GM12878 (cell line): ENCODE measurements at regions of chr10 and their contacts with region 1.

Region 1: DNA sequence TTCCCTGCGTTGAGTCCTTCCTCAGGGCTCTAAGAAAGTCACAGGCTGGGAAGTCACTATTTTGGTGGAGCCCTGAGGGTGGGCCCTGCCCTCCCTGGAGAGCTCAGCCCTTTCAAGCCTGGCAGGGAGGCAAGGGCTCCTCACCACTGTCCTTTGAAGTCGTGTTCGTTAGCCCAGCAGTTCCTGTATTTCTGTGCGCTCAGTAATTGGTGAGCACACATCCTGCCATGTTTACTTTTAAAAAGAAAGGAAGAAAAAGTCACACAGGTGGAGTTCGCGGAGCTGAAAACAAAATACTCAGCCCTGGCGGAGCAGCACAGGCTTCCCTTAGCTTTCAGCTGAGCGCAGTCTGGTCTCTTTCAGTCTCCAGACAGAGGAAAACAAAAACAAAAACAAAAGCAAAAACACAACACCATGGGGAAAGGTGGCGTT is 37.1 kb downstream of the PRKCQ start:
- DNase-seq: no peak
- ATAC-seq: peak; percentile 73
- H3K4me3 ChIP-seq: no peak overlapping the region
- H3K27ac ChIP-seq: no peak overlapping the region
- H3K4me1 ChIP-seq: peaks cover 6% of the 10 kb centered on the region
- H3K27me3 ChIP-seq: peaks cover under 1% of the 10 kb centered on the region in 2 experiments; a peak in 2 of 4 replicates
- CTCF ChIP-seq: no peak
- EP300 ChIP-seq: no peak
- POLR2A ChIP-seq: no peak
- RAD21 ChIP-seq: no peak

Region 2: GRCh38 chr10:6498771-6499170 is 44.2 kb before region 1 on chr10:
- CTCF ChIA-PET with region 1: interaction called, 3 read pairs
- POLR2A ChIA-PET with region 1: no interaction called
- RAD21 ChIA-PET with region 1: interaction called, 16 read pairs
- SMC1A ChIA-PET with region 1: interaction called, 13 read pairs
- in situ Hi-C with region 1: no loop called
- intact Hi-C with region 1: no loop called
- DNase-seq: no peak
- ATAC-seq: no peak
- H3K4me3 ChIP-seq: no peak overlapping the region
- H3K27ac ChIP-seq: no peak overlapping the region
- H3K4me1 ChIP-seq: no peaks in the 10 kb centered on the region
- H3K27me3 ChIP-seq: peaks cover 0 to 2% of the 10 kb centered on the region in 2 experiments; a peak in 2 of 4 replicates
- CTCF ChIP-seq: no peak
- EP300 ChIP-seq: no peak
- POLR2A ChIP-seq: no peak
- RAD21 ChIP-seq: no peak

Region 3: DNA sequence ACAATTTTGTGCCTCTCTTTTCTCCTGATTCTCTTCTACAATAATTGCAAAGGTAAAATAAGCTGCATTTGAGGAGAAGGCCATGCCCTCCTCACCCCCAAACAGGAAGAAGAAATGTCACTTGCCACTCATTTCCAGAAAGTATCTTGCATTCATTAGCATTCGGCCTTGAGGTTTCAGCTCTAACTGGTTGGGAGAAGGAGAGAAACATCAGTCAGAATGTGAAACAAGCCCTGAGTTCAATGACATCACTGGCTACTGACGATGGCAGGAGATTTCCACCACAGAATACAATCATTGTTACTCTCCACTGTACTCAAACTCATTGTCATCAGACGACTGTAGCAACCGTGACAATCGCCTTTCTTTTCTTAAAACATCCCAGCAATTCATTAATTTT is 35.7 kb before region 1 on chr10:
- CTCF ChIA-PET with region 1: interaction called, 3 read pairs
- POLR2A ChIA-PET with region 1: no interaction called
- RAD21 ChIA-PET with region 1: interaction called, 9 read pairs
- SMC1A ChIA-PET with region 1: interaction called, 17 read pairs
- in situ Hi-C with region 1: no loop called
- intact Hi-C with region 1: no loop called
- DNase-seq: peak; percentile 26
- ATAC-seq: peak; percentile 90
- H3K4me3 ChIP-seq: no peak overlapping the region
- H3K27ac ChIP-seq: no peak overlapping the region
- H3K4me1 ChIP-seq: no peaks in the 10 kb centered on the region
- H3K27me3 ChIP-seq: no peaks in the 10 kb centered on the region
- CTCF ChIP-seq: no peak
- EP300 ChIP-seq: peak; percentile 52 to 92; a peak in 3 of 4 replicates
- POLR2A ChIP-seq: no peak
- RAD21 ChIP-seq: no peak

Region 4: GRCh38 chr10:6514844-6515780 is 27.9 kb before region 1 on chr10:
- CTCF ChIA-PET with region 1: interaction called, 6 read pairs
- POLR2A ChIA-PET with region 1: no interaction called
- RAD21 ChIA-PET with region 1: no interaction called
- SMC1A ChIA-PET with region 1: interaction called, 17 read pairs
- in situ Hi-C with region 1: no loop called
- intact Hi-C with region 1: no loop called
- DNase-seq: no peak
- ATAC-seq: peak; percentile 43; the same call in 1 of the 3 replicates
- H3K4me3 ChIP-seq: no peak overlapping the region
- H3K27ac ChIP-seq: no peak overlapping the region
- H3K4me1 ChIP-seq: no peaks in the 10 kb centered on the region
- H3K27me3 ChIP-seq: peaks cover 0 to 8% of the 10 kb centered on the region in 2 experiments; a peak in 1 of 4 replicates
- CTCF ChIP-seq: no peak
- EP300 ChIP-seq: no peak
- POLR2A ChIP-seq: no peak
- RAD21 ChIP-seq: no peak

Region 5: DNA sequence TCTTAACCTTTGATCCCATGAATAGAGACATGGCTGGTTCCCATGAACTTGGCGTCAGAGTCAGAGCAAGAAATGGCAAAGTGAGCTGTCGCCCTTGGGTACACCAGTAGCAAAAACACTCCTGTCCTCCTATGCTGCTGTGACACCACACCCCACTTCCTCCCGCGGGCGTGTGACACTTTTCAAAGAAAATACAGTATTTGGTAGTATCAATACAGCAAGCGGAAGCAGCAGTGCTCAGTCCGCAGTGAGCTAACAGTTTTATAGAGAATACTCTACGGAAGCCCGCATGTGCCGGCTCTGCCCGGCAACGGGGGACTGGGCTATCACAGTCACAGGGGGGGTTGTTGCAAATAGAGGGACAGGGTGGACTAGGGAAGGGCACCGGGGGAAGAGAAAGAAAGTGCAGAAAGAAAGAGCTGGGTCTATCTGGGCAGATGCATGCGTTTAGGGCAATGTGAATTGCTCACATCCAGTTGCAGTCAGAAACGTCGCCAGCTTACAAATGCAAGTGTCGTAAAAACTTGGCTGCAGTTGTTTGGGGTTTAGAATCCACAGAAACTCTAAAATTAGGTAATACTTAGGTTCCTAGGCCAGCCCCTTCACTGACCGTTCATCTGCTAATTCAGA is 12.7 kb before region 1 on chr10:
- CTCF ChIA-PET with region 1: interaction called, 6 read pairs
- POLR2A ChIA-PET with region 1: interaction called, 6 read pairs
- RAD21 ChIA-PET with region 1: interaction called, 6 read pairs
- SMC1A ChIA-PET with region 1: interaction called, 21 read pairs
- in situ Hi-C with region 1: no loop called
- intact Hi-C with region 1: no loop called
- DNase-seq: no peak
- ATAC-seq: no peak
- H3K4me3 ChIP-seq: no peak overlapping the region
- H3K27ac ChIP-seq: no peak overlapping the region
- H3K4me1 ChIP-seq: no peaks in the 10 kb centered on the region
- H3K27me3 ChIP-seq: peaks cover 0 to 6% of the 10 kb centered on the region in 2 experiments; a peak in 1 of 4 replicates
- CTCF ChIP-seq: no peak
- EP300 ChIP-seq: no peak
- POLR2A ChIP-seq: no peak
- RAD21 ChIP-seq: no peak

Region 6: GRCh38 chr10:6563075-6563474 is 20.1 kb after region 1 on chr10:
- CTCF ChIA-PET with region 1: interaction called, 7 read pairs
- POLR2A ChIA-PET with region 1: interaction called, 11 read pairs
- RAD21 ChIA-PET with region 1: interaction called, 11 read pairs
- SMC1A ChIA-PET with region 1: interaction called, 18 read pairs
- in situ Hi-C with region 1: no loop called
- intact Hi-C with region 1: no loop called
- DNase-seq: no peak
- ATAC-seq: peak; percentile 65
- H3K4me3 ChIP-seq: no peak overlapping the region
- H3K27ac ChIP-seq: no peak overlapping the region
- H3K4me1 ChIP-seq: no peaks in the 10 kb centered on the region
- H3K27me3 ChIP-seq: peaks cover 0 to 6% of the 10 kb centered on the region in 2 experiments; a peak in 3 of 4 replicates
- CTCF ChIP-seq: no peak
- EP300 ChIP-seq: no peak
- POLR2A ChIP-seq: no peak
- RAD21 ChIP-seq: no peak